Prostate gland (tissue), 2 donors: ENCODE measurements at regions of chr17 and their contacts with region 1.

Region 1: GRCh38 chr17:78040440-78041385 is 82.2 kb downstream of the TNRC6C start:
- DNase-seq: peak; percentile 72
- H3K4me3 ChIP-seq: peak overlapping the region; percentile 32 to 44
- H3K27ac ChIP-seq: peak overlapping the region; percentile 78 to 80
- H3K4me1 ChIP-seq: peaks cover 4% of the 10 kb centered on the region
- H3K27me3 ChIP-seq: no peaks in the 10 kb centered on the region
- CTCF ChIP-seq: peak in 2 of 4 experiments; percentile 10 to 13
- POLR2A ChIP-seq: no peak

Region 2: GRCh38 chr17:77924757-77925336 is 115.9 kb before region 1 on chr17:
- intact Hi-C with region 1: no loop called
- DNase-seq: no peak
- H3K4me3 ChIP-seq: no peak overlapping the region
- H3K27ac ChIP-seq: no peak overlapping the region
- H3K4me1 ChIP-seq: no peaks in the 10 kb centered on the region
- H3K27me3 ChIP-seq: no peaks in the 10 kb centered on the region
- CTCF ChIP-seq: no peak
- POLR2A ChIP-seq: no peak

Region 3: DNA sequence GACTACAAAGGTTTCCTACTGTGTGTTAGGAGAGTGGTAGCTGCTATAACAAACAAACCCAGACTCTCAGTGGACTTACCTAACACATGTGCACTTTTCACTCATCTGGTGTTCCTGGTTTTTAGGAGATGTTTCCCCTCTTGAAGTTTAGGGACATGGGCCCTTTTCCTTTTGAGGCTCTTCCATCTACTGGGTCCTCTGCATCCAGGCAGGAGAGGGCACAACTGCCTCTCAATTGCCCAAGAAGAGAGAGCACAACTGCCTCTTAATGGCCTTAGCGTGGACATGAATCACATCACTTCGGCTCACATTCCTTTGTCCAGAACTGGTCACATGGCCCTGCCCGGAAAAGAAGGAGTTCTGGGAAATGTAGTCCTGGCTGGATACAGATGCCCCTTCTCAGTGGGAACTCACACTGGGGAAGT is 92.0 kb before region 1 on chr17:
- intact Hi-C with region 1: no loop called
- DNase-seq: no peak
- H3K4me3 ChIP-seq: no peak overlapping the region
- H3K27ac ChIP-seq: no peak overlapping the region
- H3K4me1 ChIP-seq: no peaks in the 10 kb centered on the region
- H3K27me3 ChIP-seq: no peaks in the 10 kb centered on the region
- CTCF ChIP-seq: no peak
- POLR2A ChIP-seq: no peak

Region 4: DNA sequence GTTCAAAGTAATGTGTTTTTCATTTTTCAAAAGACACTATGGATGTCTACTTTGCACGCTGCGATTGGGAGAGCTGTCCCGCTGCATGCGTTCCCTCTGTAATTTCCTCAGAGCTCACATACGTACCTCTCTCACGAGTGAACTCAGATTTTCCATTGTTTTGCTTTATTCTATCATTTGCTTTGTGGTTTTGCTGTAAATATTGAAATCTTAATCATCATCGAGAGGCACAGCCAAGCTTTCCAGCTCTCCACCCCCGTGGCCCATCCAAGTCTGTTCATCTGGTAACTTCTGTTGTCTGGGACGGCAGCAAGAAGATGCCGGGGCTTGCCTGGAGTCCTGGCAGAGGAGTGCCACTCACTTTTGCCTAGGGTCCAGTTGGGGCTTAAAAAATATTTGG is 66.7 kb after region 1 on chr17:
- intact Hi-C with region 1: loop called (anchors 10 kb)
- DNase-seq: no peak
- H3K4me3 ChIP-seq: no peak overlapping the region
- H3K27ac ChIP-seq: no peak overlapping the region
- H3K4me1 ChIP-seq: no peaks in the 10 kb centered on the region
- H3K27me3 ChIP-seq: no peaks in the 10 kb centered on the region
- CTCF ChIP-seq: no peak
- POLR2A ChIP-seq: no peak

Region 5: DNA sequence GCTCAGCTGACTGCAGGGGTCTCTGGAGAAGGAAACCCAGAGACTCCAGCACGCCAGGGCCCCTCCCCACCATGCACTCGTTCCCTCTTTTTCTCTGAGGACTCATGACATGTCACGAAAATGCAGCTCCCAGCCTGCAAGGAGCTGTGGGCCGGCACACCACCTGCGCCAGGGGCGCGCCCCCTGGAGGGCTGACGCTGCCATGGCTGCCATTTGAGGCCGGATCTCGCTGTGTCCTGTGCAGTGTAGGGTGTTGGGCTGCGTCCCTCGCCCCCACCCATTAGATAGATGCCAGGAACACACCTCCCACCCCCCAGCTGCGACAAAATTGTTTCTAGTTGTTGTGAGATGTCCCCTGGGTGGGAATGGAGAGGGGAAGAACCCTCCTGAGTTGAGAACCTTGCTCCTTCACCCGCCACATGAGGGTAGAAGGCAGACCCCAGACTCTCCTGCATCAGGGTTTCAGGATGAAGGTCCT is 135.9 kb after region 1 on chr17:
- intact Hi-C with region 1: loop called (anchors 10 kb)
- DNase-seq: peak; percentile 73
- H3K4me3 ChIP-seq: no peak overlapping the region
- H3K27ac ChIP-seq: peak overlapping the region in 1 of 2 donors; percentile 23
- H3K4me1 ChIP-seq: peaks cover 18% of the 10 kb centered on the region
- H3K27me3 ChIP-seq: no peaks in the 10 kb centered on the region
- CTCF ChIP-seq: peak; percentile 56 to 93 (median 79)
- POLR2A ChIP-seq: no peak